Activated CD4-positive, alpha-beta memory T cell treated with anti-CD3 and anti-CD28 coated beads for 36 hours (primary cell): ENCODE measurements at regions of chr2 and their contacts with region 1.

Region 1: DNA sequence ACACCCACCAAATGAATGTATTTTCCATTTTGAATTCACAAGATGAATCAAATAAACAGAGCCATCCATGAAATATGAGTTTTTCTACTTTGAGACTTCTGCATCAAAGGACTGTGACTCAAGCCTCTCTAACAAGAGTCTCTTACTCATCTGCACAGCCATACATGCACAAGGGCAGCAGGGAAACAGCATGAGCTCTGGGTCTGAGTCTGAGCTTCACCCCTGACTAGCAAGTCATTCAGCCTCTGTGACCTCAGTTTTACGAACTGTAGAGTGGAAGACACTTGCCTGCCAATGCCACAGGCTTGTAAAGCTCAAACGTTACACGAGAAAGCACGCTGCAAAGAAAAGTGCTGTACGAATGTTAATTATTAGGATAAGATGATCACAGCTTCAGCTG is 42.9 kb downstream of the MREG start:
- DNase-seq: peak; percentile 61
- H3K4me3 Mint-ChIP-seq: no peak overlapping the region
- H3K27ac Mint-ChIP-seq: peak overlapping the region; percentile 58
- H3K4me1 Mint-ChIP-seq: peaks cover 20% of the 10 kb centered on the region
- H3K27me3 Mint-ChIP-seq: no peaks in the 10 kb centered on the region

Region 2: GRCh38 chr2:215982080-215982875 is 11.9 kb after region 1 on chr2:
- CTCF ChIA-PET with region 1: interaction called, 3 read pairs
- POLR2A ChIA-PET with region 1: no interaction called
- intact Hi-C with region 1: loop called (anchors 1 kb)
- DNase-seq: peak; percentile 69
- H3K4me3 Mint-ChIP-seq: no peak overlapping the region
- H3K27ac Mint-ChIP-seq: no peak overlapping the region
- H3K4me1 Mint-ChIP-seq: peaks cover 36% of the 10 kb centered on the region
- H3K27me3 Mint-ChIP-seq: no peaks in the 10 kb centered on the region